HAP-1 (cell line): ENCODE measurements at regions of chr13 and their contacts with region 1.

Region 1: DNA sequence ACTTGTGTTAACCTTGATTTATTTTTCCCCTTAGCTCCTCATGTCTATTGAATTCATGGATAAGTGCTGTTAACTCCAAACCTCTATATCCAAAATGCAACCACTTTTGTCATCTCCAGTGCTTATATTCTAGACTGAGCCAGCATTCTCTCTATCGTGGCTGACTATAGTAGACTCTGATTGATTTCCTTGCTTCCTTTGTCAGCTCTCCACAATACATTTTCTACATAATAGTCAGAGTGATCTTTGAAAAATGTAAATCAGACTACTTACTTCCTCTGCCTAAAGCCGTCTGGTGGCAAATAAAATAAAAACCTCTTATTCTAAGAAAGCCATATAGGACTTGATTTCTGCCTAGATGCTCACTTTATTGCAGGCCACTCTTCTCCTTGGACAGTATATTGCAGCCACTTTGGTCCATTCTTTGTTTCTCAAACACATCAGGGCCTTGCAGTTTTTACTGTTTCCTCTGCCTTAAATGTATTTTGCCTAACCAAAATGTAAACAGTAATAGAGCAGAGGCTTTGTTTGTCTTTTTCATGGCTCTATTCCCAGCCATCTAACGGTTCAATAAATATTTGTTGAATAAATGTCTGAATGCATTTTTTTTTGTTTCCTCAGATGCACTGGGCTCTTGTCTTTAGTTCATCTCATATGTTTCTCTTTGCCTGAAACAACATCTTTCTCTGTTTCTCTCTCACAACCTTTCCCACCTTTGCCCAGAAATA is 243.6 kb upstream of the CSNK1A1L start:
- DNase-seq: no peak
- H3K4me3 ChIP-seq: no peak overlapping the region
- H3K4me1 ChIP-seq: no peaks in the 10 kb centered on the region
- H3K27me3 ChIP-seq: no peaks in the 10 kb centered on the region

Region 2: DNA sequence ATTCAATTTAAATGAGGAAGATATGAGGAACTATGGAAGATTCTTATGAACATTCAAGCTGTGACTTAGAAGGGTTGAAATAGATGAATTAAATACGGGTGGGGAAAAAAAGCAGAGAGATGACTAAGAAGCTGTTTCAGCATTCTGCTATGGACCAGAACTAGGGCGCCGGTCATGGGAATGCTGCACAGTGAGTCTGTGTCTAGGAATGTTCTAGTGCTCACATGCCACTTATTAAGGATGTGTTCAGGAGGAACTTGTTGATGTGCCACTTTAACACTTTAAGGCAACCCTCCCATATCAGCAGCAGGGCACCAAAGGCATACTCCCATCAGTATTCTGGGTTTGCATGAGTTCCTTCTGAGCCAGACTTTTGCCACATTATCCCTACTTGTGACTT is 97.4 kb after region 1 on chr13:
- in situ Hi-C with region 1: loop called (anchors 25 kb)
- DNase-seq: no peak
- H3K4me3 ChIP-seq: no peak overlapping the region
- H3K4me1 ChIP-seq: no peaks in the 10 kb centered on the region
- H3K27me3 ChIP-seq: no peaks in the 10 kb centered on the region